Caco-2 (cell line): ENCODE measurements at regions of chr3 and their contacts with region 1.

Region 1: GRCh38 chr3:45311953-45312801 is 76.2 kb upstream of the LARS2 start:
- DNase-seq: no peak
- H3K4me3 ChIP-seq: no peak overlapping the region
- H3K4me3 Mint-ChIP-seq: no peak overlapping the region
- H3K27ac Mint-ChIP-seq: no peak overlapping the region
- H3K4me1 ChIP-seq: no peaks in the 10 kb centered on the region
- H3K4me1 Mint-ChIP-seq: no peaks in the 10 kb centered on the region
- H3K27me3 ChIP-seq: no peaks in the 10 kb centered on the region
- H3K27me3 Mint-ChIP-seq: peaks cover 24% of the 10 kb centered on the region
- CTCF ChIP-seq: no peak

Region 2: GRCh38 chr3:45297331-45297730 is 14.8 kb before region 1 on chr3:
- CTCF ChIA-PET with region 1: no interaction called
- POLR2A ChIA-PET with region 1: no interaction called
- intact Hi-C with region 1: loop called (anchors 1 kb)
- DNase-seq: no peak
- H3K4me3 ChIP-seq: no peak overlapping the region
- H3K4me3 Mint-ChIP-seq: no peak overlapping the region
- H3K27ac Mint-ChIP-seq: no peak overlapping the region
- H3K4me1 ChIP-seq: no peaks in the 10 kb centered on the region
- H3K4me1 Mint-ChIP-seq: peaks cover 4% of the 10 kb centered on the region
- H3K27me3 ChIP-seq: no peaks in the 10 kb centered on the region
- H3K27me3 Mint-ChIP-seq: peaks cover 2% of the 10 kb centered on the region
- CTCF ChIP-seq: no peak